T-cell (primary cell): ENCODE measurements at regions of chr17 and their contacts with region 1.

Region 1: DNA sequence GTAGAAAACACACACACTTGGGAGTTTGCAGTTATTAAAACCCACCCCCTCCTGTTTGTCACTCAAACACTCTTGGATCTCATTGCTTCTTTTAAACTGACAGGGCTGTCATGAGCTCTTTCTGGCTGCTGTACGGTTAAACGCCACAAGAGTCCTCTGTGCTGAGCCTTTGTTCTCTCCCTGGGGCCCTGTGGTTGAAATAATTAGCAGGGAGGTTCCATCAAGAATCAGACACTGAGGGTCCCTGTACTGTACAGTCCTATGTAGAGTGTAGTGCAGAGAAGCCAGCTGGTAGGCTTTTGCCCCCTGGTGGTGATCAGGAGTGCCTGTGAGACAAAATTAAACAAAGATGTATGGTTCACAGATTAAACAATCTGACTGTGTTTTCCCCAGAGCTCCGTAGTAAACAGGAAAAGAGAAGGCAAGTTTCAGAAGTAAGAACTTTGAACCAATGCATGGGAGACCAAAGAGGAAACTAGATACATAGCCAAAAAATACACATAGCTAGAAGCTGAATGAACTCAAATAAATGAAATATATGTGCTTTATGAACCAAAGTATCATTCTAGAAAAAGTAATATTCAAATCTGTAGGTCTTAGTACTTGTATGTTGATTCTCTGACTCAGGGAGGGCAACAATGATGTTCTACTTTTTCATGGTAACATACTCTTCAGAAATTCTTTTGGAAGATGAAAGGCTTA is 1.4 kb upstream of the SSH2 start:
- DNase-seq: peak; percentile 44 to 86 (median 67)
- ATAC-seq: peak; percentile 69 to 72 (median 72)
- H3K4me3 ChIP-seq: peak overlapping the region; percentile 92 to 95
- H3K4me3 Mint-ChIP-seq: no peak overlapping the region
- H3K27ac ChIP-seq: peak overlapping the region; percentile 59
- H3K27ac Mint-ChIP-seq: no peak overlapping the region
- H3K4me1 ChIP-seq: peaks cover 17 to 32% of the 10 kb centered on the region in 2 experiments
- H3K4me1 Mint-ChIP-seq: peaks cover 24 to 31% (median 31%) of the 10 kb centered on the region in 3 donors
- H3K27me3 ChIP-seq: no peaks in the 10 kb centered on the region
- H3K27me3 Mint-ChIP-seq: peaks cover 0 to 1% of the 10 kb centered on the region in 2 donors

Region 2: DNA sequence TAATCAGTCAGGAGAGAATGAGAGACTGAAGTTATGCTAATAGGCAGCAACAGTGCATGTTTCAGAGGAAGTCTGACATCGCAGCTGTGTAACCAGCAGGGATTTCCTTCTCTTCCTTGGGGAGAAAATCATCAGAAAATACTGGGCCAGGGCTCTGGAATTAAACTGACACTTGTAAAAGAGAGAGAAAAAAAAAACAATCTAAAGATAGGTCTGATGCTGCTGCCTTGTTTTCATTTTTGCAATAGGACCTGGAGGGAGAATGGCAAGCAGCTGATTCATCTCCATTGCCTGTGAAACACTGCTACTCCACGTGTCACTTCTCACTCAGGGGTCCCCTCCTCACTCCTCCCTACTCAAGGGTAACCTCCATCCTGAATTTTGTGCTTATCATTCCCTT is 291.0 kb before region 1 on chr17:
- CTCF ChIA-PET with region 1: interaction called in 1 of 2 experiments, 32 read pairs
- POLR2A ChIA-PET with region 1: no interaction called
- DNase-seq: no peak
- ATAC-seq: no peak
- H3K4me3 ChIP-seq: no peak overlapping the region
- H3K4me3 Mint-ChIP-seq: no peak overlapping the region
- H3K27ac ChIP-seq: no peak overlapping the region
- H3K27ac Mint-ChIP-seq: peak overlapping the region; percentile 65 to 80
- H3K4me1 ChIP-seq: no peaks in the 10 kb centered on the region
- H3K4me1 Mint-ChIP-seq: peaks cover 9 to 26% (median 26%) of the 10 kb centered on the region in 3 donors
- H3K27me3 ChIP-seq: no peaks in the 10 kb centered on the region
- H3K27me3 Mint-ChIP-seq: no peaks in the 10 kb centered on the region

Region 3: DNA sequence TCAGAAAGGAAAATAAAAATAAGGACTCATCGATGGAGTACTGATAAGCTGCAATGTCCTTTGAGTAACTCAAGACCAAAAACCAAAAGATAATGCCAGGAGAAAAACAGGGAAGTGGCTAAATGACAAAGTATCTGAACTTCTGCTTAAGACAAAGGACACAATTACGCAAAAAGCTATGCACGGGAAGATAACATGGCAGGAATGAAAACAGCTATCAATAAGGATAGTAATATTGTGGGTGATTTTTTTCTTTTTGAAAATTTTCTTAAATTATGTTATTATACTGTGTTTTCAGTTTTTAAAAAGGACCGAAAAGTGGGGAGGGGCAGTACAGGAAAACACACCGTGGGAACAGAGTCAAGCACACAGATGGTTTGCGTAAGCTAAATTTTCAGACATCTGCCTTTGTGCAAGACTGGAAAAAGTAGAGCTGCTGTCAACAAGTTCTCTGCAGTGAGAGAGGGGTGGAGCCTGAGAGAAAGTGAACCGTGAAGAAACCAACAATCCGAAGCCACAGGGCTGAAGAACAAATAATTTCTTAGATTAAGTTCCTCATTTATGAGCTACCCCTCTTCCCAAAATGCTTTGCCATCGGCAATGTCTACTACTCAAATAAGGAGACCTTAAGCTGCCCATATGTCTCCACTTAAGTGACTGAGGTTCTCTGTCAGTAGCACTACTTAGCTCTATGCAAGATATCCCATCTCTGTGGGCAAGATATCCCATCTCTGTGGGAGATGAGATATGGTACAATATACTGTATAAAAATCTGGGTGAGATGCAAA is 208.8 kb before region 1 on chr17:
- CTCF ChIA-PET with region 1: no interaction called
- POLR2A ChIA-PET with region 1: no interaction called
- DNase-seq: peak in 33 of 35 experiments; percentile 24 to 84 (median 58)
- ATAC-seq: peak; percentile 79 to 86 (median 82)
- H3K4me3 ChIP-seq: peak overlapping the region; percentile 10 to 20
- H3K4me3 Mint-ChIP-seq: peak overlapping the region; percentile 43 to 57 (median 55)
- H3K27ac ChIP-seq: peak overlapping the region; percentile 73
- H3K27ac Mint-ChIP-seq: peak overlapping the region; percentile 90 to 93
- H3K4me1 ChIP-seq: peaks cover 53 to 65% of the 10 kb centered on the region in 2 experiments
- H3K4me1 Mint-ChIP-seq: peaks cover 82 to 90% (median 86%) of the 10 kb centered on the region in 3 donors
- H3K27me3 ChIP-seq: no peaks in the 10 kb centered on the region
- H3K27me3 Mint-ChIP-seq: no peaks in the 10 kb centered on the region

Region 4: DNA sequence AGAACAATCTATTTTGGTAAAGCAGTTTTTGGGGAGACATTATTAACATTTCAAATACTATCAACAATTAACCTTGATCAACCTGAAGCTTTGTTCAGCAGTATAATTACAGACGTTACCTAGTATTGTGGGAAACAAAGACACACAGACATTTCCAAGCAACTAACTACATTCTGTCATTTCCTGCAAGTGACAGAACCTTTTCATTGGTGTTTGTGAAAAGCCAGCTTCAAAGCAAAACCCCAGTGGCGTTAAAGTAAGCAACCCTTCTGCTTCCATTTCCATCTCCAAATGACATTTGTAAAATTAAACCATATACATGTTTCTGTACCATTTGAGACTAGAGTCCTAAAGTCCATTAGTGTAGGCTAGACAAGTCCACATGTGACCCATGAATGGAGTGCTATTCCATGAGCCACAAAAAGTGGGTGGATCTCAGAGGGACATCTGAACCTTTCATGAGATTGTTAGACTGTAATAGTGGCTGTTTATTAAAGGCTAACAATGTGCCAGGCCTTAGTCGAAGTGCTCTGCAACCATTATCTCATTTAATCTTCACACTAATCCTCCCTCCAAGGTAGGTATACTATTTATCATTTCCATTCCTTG is 102.6 kb before region 1 on chr17:
- CTCF ChIA-PET with region 1: interaction called, 3 to 14 read pairs
- POLR2A ChIA-PET with region 1: interaction called in 1 of 2 experiments, 4 read pairs
- DNase-seq: peak in 5 of 35 experiments; percentile 16 to 44 (median 19)
- ATAC-seq: peak in 3 of 4 experiments; percentile 37 to 87 (median 54)
- H3K4me3 ChIP-seq: no peak overlapping the region
- H3K4me3 Mint-ChIP-seq: no peak overlapping the region
- H3K27ac ChIP-seq: no peak overlapping the region
- H3K27ac Mint-ChIP-seq: no peak overlapping the region
- H3K4me1 ChIP-seq: peaks cover 0 to 43% of the 10 kb centered on the region in 2 experiments
- H3K4me1 Mint-ChIP-seq: peaks cover 46 to 54% (median 51%) of the 10 kb centered on the region in 3 donors
- H3K27me3 ChIP-seq: no peaks in the 10 kb centered on the region
- H3K27me3 Mint-ChIP-seq: no peaks in the 10 kb centered on the region

Region 5: GRCh38 chr17:29909236-29910003 is 22.0 kb before region 1 on chr17:
- CTCF ChIA-PET with region 1: interaction called, 8 to 13 read pairs
- POLR2A ChIA-PET with region 1: interaction called in 1 of 2 experiments, 3 read pairs
- DNase-seq: no peak
- ATAC-seq: peak in 3 of 4 experiments; percentile 48 to 65 (median 57)
- H3K4me3 ChIP-seq: no peak overlapping the region
- H3K4me3 Mint-ChIP-seq: no peak overlapping the region
- H3K27ac ChIP-seq: no peak overlapping the region
- H3K27ac Mint-ChIP-seq: peak overlapping the region in 1 of 2 donors; percentile 11
- H3K4me1 ChIP-seq: peaks cover 3 to 5% of the 10 kb centered on the region in 2 experiments
- H3K4me1 Mint-ChIP-seq: peaks cover 42 to 57% (median 43%) of the 10 kb centered on the region in 3 donors
- H3K27me3 ChIP-seq: no peaks in the 10 kb centered on the region
- H3K27me3 Mint-ChIP-seq: no peaks in the 10 kb centered on the region

Region 6: GRCh38 chr17:29958947-29959657 is 27.7 kb after region 1 on chr17:
- CTCF ChIA-PET with region 1: interaction called, 3 to 6 read pairs
- POLR2A ChIA-PET with region 1: interaction called, 8 to 13 read pairs
- DNase-seq: no peak
- ATAC-seq: no peak
- H3K4me3 ChIP-seq: no peak overlapping the region
- H3K4me3 Mint-ChIP-seq: no peak overlapping the region
- H3K27ac ChIP-seq: no peak overlapping the region
- H3K27ac Mint-ChIP-seq: no peak overlapping the region
- H3K4me1 ChIP-seq: no peaks in the 10 kb centered on the region
- H3K4me1 Mint-ChIP-seq: no peaks in the 10 kb centered on the region
- H3K27me3 ChIP-seq: no peaks in the 10 kb centered on the region
- H3K27me3 Mint-ChIP-seq: no peaks in the 10 kb centered on the region

Region 7: DNA sequence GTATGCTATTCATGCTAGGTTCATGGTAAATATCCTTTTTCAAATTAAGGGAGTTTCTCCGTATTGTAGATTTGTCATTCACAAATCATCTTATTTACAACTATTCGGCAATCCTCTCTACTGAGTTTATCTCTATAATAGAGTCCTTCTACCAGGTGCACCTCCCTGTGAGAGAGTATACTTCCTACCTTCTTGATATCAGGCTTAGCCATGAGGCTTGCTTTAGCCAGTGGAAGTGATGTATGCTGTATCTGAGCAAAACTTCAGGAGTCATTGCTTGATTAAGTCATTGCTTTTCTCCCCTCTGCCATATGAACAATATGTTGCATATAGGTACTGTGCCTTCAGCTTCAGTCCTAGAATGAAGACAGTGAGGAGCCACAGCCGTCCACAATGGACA is 205.8 kb after region 1 on chr17:
- CTCF ChIA-PET with region 1: no interaction called
- POLR2A ChIA-PET with region 1: no interaction called
- DNase-seq: no peak
- ATAC-seq: no peak
- H3K4me3 ChIP-seq: no peak overlapping the region
- H3K4me3 Mint-ChIP-seq: no peak overlapping the region
- H3K27ac ChIP-seq: no peak overlapping the region
- H3K27ac Mint-ChIP-seq: no peak overlapping the region
- H3K4me1 ChIP-seq: peaks cover 0 to 3% of the 10 kb centered on the region in 2 experiments
- H3K4me1 Mint-ChIP-seq: peaks cover 15 to 37% (median 32%) of the 10 kb centered on the region in 3 donors
- H3K27me3 ChIP-seq: no peaks in the 10 kb centered on the region
- H3K27me3 Mint-ChIP-seq: no peaks in the 10 kb centered on the region